Motor neuron (in vitro differentiated cells): ENCODE measurements at regions of chr13 and their contacts with region 1.

Region 1: DNA sequence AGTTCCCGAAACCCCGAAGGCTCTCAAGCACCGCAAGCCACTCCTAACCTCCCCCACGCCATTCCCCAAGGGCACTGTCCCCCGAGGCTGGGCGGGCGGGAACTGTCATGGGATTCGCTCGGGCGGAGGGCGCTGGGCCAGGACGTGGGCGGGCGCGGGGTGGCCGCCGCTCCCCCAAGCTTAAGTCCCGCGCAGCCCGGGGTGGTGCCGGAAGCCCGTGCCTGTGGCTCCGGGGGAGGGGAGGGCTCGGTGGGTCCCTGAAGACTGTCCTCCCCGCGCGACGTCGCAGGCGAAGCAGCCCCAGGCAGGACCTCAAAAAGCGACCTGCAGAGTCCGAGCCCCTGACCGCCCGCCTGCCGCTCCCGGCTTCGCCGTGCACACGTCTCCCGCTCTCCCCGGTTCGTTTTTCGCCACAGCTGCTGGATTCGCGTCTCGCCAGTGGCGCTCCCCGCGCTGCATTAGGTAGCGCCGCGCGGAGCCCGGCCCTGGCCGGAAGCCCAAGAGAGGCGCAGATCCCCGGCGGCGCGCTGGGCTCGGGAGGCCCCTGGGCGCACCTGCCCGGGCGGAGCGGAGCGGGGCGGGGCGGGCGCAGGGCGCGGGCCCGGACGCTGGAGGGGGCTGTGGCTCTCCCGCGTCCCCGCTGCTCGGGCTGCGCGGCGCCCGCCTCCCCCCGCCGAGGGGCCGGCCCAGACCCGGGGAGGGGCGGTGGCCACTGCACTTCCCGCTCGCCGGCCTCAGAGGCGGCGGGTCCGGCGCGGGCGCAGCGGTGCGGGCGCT is at the start of gene FARP1:
- ATAC-seq: peak; percentile 73 to 92 (median 89)
- H3K4me3 ChIP-seq: peak within 1 kb of the TSS; percentile 60 to 98 (median 88)
- H3K27ac ChIP-seq: peak within 1 kb of the TSS; percentile 54 to 72
- H3K4me1 ChIP-seq: peaks cover 14 to 22% of the 10 kb centered on the region in 2 donors
- total RNA-seq, gene FARP1: 6.5 to 349 (median 25.6) TPM

Region 2: GRCh38 chr13:98239162-98240076 is 96.9 kb after region 1 on chr13:
- in situ Hi-C with region 1: loop called in 1 of 9 experiments (anchors 25 kb)
- ATAC-seq: peak in 1 of 8 experiments; percentile 17
- H3K4me3 ChIP-seq: no peak overlapping the region
- H3K27ac ChIP-seq: no peak overlapping the region
- H3K4me1 ChIP-seq: no peaks in the 10 kb centered on the region